Activated CD4-positive, alpha-beta T cell treated with anti-CD3 and anti-CD28 coated beads for 36 hours (primary cell): ENCODE measurements at regions of chr5 and their contacts with region 1.

Region 1: DNA sequence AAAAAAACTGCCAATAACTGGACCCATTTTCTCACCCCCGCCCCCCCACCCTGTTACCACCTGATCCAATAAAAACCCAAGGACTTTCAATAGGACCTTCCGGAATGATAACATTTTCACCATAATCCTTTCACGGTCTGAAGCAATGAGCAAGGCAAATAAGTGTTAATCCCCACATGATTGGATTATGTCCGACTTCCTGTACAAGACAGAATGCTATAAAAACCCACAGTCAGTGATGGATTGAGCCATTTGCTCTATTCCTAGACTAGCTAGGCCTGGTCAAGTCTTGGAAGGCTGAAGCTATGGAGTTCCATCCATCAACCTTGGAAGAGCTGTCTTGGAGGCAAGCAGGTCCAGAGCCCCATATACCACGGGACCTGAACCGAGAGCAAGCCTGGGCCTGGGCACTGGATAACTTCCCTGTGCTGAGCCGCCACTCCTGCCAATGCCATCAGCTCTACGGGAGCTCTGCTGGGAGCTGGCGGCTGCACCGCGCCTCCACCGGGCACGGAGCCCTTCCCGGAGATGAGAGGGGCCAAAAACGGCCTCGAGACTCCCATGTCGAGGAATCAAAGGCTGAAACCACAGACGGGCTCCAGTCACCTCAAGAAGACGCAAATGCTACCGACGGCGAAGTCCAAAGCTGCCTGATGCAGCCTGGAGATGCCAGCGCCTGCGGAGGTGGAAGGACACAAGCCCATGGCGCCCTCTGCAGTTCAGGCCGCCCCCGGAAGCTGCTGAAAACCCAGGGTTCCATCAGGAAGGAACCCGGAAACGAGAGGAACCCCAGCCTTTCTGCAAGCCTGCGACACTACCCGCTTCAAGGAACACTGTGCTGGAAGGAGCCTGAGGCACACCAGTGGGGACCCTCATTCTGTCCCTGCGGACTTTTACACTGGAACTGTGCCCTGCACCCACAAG is 69.2 kb downstream of the ANXA2R start:
- DNase-seq: peak; percentile 55
- ATAC-seq: no peak
- H3K4me3 Mint-ChIP-seq: no peak overlapping the region
- H3K27ac Mint-ChIP-seq: no peak overlapping the region
- H3K4me1 Mint-ChIP-seq: peaks cover 5% of the 10 kb centered on the region
- H3K27me3 Mint-ChIP-seq: no peaks in the 10 kb centered on the region

Region 2: GRCh38 chr5:42216904-42217303 is 754.0 kb before region 1 on chr5:
- CTCF ChIA-PET with region 1: no interaction called
- POLR2A ChIA-PET with region 1: no interaction called
- intact Hi-C with region 1: no loop called
- DNase-seq: no peak
- ATAC-seq: no peak
- H3K4me3 Mint-ChIP-seq: no peak overlapping the region
- H3K27ac Mint-ChIP-seq: no peak overlapping the region
- H3K4me1 Mint-ChIP-seq: no peaks in the 10 kb centered on the region
- H3K27me3 Mint-ChIP-seq: no peaks in the 10 kb centered on the region

Region 3: GRCh38 chr5:42960506-42960905 is 10.4 kb before region 1 on chr5:
- CTCF ChIA-PET with region 1: no interaction called
- POLR2A ChIA-PET with region 1: no interaction called
- intact Hi-C with region 1: no loop called
- DNase-seq: no peak
- ATAC-seq: no peak
- H3K4me3 Mint-ChIP-seq: no peak overlapping the region
- H3K27ac Mint-ChIP-seq: no peak overlapping the region
- H3K4me1 Mint-ChIP-seq: no peaks in the 10 kb centered on the region
- H3K27me3 Mint-ChIP-seq: no peaks in the 10 kb centered on the region

Region 4: DNA sequence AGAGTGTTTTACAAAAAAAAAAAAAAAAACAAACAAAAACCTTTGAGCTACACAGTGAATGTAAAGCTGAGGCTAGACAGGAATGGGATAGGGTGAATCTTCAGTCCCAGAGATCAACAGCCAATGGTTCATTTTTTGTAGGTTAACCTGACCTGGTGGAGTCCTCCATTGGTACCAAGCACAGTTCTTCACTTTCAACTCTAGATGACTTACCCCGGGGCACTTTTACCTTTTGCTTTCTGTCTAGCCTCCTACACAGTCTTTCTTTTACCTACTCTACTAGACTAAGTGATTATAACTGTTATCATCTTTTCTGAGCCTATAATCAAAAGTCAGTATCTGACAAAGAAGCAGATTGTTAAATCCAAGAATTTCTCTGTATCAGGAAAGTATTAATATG is 18.3 kb after region 1 on chr5:
- CTCF ChIA-PET with region 1: interaction called, 11 read pairs
- POLR2A ChIA-PET with region 1: no interaction called
- intact Hi-C with region 1: no loop called
- DNase-seq: no peak
- ATAC-seq: no peak
- H3K4me3 Mint-ChIP-seq: peak overlapping the region; percentile 61
- H3K27ac Mint-ChIP-seq: peak overlapping the region; percentile 43
- H3K4me1 Mint-ChIP-seq: peaks cover 52% of the 10 kb centered on the region
- H3K27me3 Mint-ChIP-seq: no peaks in the 10 kb centered on the region

Region 5: DNA sequence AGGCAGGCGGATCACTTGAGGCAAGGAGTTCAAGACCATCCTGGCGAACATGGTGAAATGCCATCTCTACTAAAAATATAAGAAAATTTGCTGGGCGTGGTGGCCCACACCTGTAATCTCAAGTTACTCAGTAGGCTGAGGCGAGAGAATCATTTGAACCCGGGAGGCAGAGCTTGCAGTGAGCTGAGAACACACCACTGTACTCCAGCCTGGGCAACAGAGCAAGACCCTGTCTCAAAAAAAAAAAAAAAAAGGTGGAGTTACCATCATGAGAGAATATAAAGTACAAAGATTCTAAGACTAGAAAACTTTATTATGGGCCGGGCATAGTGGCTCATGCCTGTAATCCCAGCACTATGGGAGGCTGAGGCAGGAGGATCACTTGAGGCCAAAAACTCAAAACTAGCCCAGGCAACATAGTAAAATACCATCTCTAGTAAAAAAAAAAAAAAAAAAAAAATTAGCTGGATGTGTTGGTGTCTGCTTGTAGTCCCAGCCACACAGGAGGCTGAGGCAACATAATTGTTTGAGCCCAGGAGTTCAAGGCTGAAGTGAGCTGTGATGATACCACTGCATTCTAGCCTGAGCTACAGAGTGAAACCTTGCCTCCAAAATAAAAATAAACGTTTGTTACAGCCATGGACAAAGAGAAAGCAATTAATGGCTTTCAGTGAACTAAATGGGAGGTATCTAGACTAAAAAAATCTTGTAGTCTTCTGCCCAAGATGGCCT is 56.3 kb after region 1 on chr5:
- CTCF ChIA-PET with region 1: no interaction called
- POLR2A ChIA-PET with region 1: no interaction called
- intact Hi-C with region 1: no loop called
- DNase-seq: no peak
- ATAC-seq: no peak
- H3K4me3 Mint-ChIP-seq: no peak overlapping the region
- H3K27ac Mint-ChIP-seq: no peak overlapping the region
- H3K4me1 Mint-ChIP-seq: peaks cover 32% of the 10 kb centered on the region
- H3K27me3 Mint-ChIP-seq: no peaks in the 10 kb centered on the region